CD4-positive, alpha-beta T cell (primary cell): ENCODE measurements at regions of chr1 and their contacts with region 1.

Region 1: GRCh38 chr1:202348509-202349205 is at the start of gene PPP1R12B:
- DNase-seq: peak; percentile 90 to 98 (median 94)
- ATAC-seq: peak; percentile 96
- H3K4me3 ChIP-seq: peak within 1 kb of the TSS; percentile 91
- H3K4me3 Mint-ChIP-seq: peak within 1 kb of the TSS; percentile 92
- H3K27ac ChIP-seq: peak within 1 kb of the TSS; percentile 70 to 77
- H3K27ac Mint-ChIP-seq: peak within 1 kb of the TSS; percentile 87
- H3K4me1 ChIP-seq: peaks cover 7% of the 10 kb centered on the region
- H3K4me1 Mint-ChIP-seq: peaks cover 33% of the 10 kb centered on the region
- H3K27me3 ChIP-seq: no peaks in the 10 kb centered on the region
- H3K27me3 Mint-ChIP-seq: no peaks in the 10 kb centered on the region
- CTCF ChIP-seq: no peak
- total RNA-seq, gene PPP1R12B: 15.0 to 15.3 TPM

Region 2: DNA sequence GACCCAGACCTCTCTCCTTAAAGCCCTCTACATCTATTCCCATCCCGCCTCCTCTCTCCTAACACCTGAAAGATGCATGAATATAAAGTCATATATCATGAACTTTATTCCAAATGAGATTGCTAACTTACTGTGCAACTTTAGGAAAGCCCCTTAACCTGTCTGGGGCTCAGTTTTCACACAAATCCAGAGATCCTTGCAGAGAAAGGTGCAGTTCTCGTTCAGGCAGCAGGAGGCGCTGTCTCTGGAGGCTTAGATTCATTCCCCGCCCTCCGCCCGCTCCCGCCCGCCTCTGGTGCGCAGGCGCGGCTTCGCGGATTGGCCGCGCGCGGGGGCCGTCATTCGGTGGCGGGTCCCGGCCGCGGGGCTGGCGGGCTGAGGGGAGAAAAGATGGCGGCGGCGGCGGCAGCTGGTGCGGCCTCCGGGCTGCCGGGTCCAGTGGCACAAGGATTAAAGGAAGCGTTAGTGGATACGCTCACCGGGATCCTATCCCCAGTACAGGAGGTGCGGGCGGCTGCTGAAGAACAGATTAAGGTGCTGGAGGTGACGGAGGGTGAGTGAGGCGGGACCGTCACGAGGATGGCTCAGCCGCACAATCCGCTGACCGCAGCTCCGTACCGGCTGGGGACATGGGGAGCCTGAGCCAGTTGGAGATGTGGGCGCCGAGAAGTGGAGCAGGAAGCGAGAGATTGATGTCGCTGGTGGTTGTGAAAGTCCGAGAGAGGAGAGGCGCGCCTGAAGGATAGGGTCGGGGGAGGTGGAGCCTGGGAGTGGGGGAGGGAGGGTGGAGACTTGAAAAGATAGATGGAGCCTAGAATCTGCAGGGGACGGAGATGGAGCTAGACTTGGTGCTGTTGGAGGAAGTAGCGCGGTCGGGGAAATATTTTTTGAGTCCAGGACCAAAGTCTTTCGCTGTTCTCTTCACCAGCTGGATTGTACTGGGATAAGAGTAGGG is 519.6 kb before region 1 on chr1 and contains the start of gene IPO9:
- CTCF ChIA-PET with region 1: no interaction called
- POLR2A ChIA-PET with region 1: no interaction called
- intact Hi-C with region 1: loop called in 1 of 2 experiments (anchors 10 kb)
- DNase-seq: peak; percentile 90 to 98 (median 94)
- ATAC-seq: peak; percentile 91
- H3K4me3 ChIP-seq: peak within 1 kb of the TSS; percentile 94
- H3K4me3 Mint-ChIP-seq: peak within 1 kb of the TSS; percentile 95
- H3K27ac ChIP-seq: peak within 1 kb of the TSS; percentile 84 to 90
- H3K27ac Mint-ChIP-seq: peak within 1 kb of the TSS; percentile 88
- H3K4me1 ChIP-seq: peaks cover 33% of the 10 kb centered on the region
- H3K4me1 Mint-ChIP-seq: peaks cover 44% of the 10 kb centered on the region
- H3K27me3 ChIP-seq: no peaks in the 10 kb centered on the region
- H3K27me3 Mint-ChIP-seq: no peaks in the 10 kb centered on the region
- CTCF ChIP-seq: peak; percentile 97
- total RNA-seq, gene IPO9: 17.1 to 20.1 TPM

Region 3: GRCh38 chr1:202716654-202717053 is 368.0 kb after region 1 on chr1:
- CTCF ChIA-PET with region 1: no interaction called
- POLR2A ChIA-PET with region 1: interaction called, 3 read pairs
- intact Hi-C with region 1: loop called (anchors 1 to 2 kb)
- DNase-seq: no peak
- ATAC-seq: no peak
- H3K4me3 ChIP-seq: no peak overlapping the region
- H3K4me3 Mint-ChIP-seq: no peak overlapping the region
- H3K27ac ChIP-seq: no peak overlapping the region
- H3K27ac Mint-ChIP-seq: no peak overlapping the region
- H3K4me1 ChIP-seq: no peaks in the 10 kb centered on the region
- H3K4me1 Mint-ChIP-seq: peaks cover 4% of the 10 kb centered on the region
- H3K27me3 ChIP-seq: peaks cover 8 to 19% of the 10 kb centered on the region in 2 experiments
- H3K27me3 Mint-ChIP-seq: peaks cover 17% of the 10 kb centered on the region
- CTCF ChIP-seq: no peak

Region 4: GRCh38 chr1:202810615-202811295 is 462.1 kb after region 1 on chr1 and contains the start of gene PCAT6:
- CTCF ChIA-PET with region 1: no interaction called
- POLR2A ChIA-PET with region 1: no interaction called
- intact Hi-C with region 1: loop called in 1 of 2 experiments (anchors 10 kb)
- DNase-seq: peak; percentile 67 to 93 (median 81)
- ATAC-seq: peak; percentile 67
- H3K4me3 ChIP-seq: peak within 1 kb of the TSS; percentile 96
- H3K4me3 Mint-ChIP-seq: peak within 1 kb of the TSS; percentile 90
- H3K27ac ChIP-seq: peak within 1 kb of the TSS in 1 of 2 donors; percentile 35
- H3K27ac Mint-ChIP-seq: peak within 1 kb of the TSS; percentile 80
- H3K4me1 ChIP-seq: peaks cover 33% of the 10 kb centered on the region
- H3K4me1 Mint-ChIP-seq: peaks cover 38% of the 10 kb centered on the region
- H3K27me3 ChIP-seq: no peaks in the 10 kb centered on the region
- H3K27me3 Mint-ChIP-seq: no peaks in the 10 kb centered on the region
- CTCF ChIP-seq: no peak
- total RNA-seq, gene PCAT6: 0.91 to 1.3 TPM

Region 5: GRCh38 chr1:203006948-203007871 is 658.6 kb after region 1 on chr1 and contains the start of gene TMEM183A:
- CTCF ChIA-PET with region 1: no interaction called
- POLR2A ChIA-PET with region 1: interaction called, 4 read pairs
- intact Hi-C with region 1: loop called in 1 of 2 experiments (anchors 5 kb)
- DNase-seq: peak; percentile 88 to 98 (median 92)
- ATAC-seq: peak; percentile 94
- H3K4me3 ChIP-seq: peak within 1 kb of the TSS; percentile 71
- H3K4me3 Mint-ChIP-seq: peak within 1 kb of the TSS; percentile 99
- H3K27ac ChIP-seq: peak within 1 kb of the TSS; percentile 71 to 96
- H3K27ac Mint-ChIP-seq: peak within 1 kb of the TSS; percentile 95
- H3K4me1 ChIP-seq: peaks cover 19% of the 10 kb centered on the region
- H3K4me1 Mint-ChIP-seq: peaks cover 35% of the 10 kb centered on the region
- H3K27me3 ChIP-seq: no peaks in the 10 kb centered on the region
- H3K27me3 Mint-ChIP-seq: no peaks in the 10 kb centered on the region
- CTCF ChIP-seq: no peak
- total RNA-seq, gene TMEM183A: 187 to 194 TPM

Region 6: GRCh38 chr1:203795441-203796235 is 1447.0 kb after region 1 on chr1 and contains the starts of genes ZBED6 and ZC3H11A:
- CTCF ChIA-PET with region 1: no interaction called
- POLR2A ChIA-PET with region 1: no interaction called
- intact Hi-C with region 1: loop called in 1 of 2 experiments (anchors 10 kb)
- DNase-seq: peak; percentile 96 to 100 (median 98)
- ATAC-seq: peak; percentile 98
- H3K4me3 ChIP-seq: peak within 1 kb of the TSS; percentile 83
- H3K4me3 Mint-ChIP-seq: peak within 1 kb of the TSS; percentile 98
- H3K27ac ChIP-seq: peak within 1 kb of the TSS; percentile 83 to 87
- H3K27ac Mint-ChIP-seq: peak within 1 kb of the TSS; percentile 86
- H3K4me1 ChIP-seq: peaks cover 32% of the 10 kb centered on the region
- H3K4me1 Mint-ChIP-seq: peaks cover 56% of the 10 kb centered on the region
- H3K27me3 ChIP-seq: no peaks in the 10 kb centered on the region
- H3K27me3 Mint-ChIP-seq: no peaks in the 10 kb centered on the region
- CTCF ChIP-seq: no peak
- total RNA-seq, gene ZBED6: 25.0 to 25.2 TPM
- total RNA-seq, gene ZC3H11A: 67.6 to 73.3 TPM